CD4-positive, alpha-beta memory T cell (primary cell): ENCODE measurements at regions of chr7 and their contacts with region 1.

Region 1: DNA sequence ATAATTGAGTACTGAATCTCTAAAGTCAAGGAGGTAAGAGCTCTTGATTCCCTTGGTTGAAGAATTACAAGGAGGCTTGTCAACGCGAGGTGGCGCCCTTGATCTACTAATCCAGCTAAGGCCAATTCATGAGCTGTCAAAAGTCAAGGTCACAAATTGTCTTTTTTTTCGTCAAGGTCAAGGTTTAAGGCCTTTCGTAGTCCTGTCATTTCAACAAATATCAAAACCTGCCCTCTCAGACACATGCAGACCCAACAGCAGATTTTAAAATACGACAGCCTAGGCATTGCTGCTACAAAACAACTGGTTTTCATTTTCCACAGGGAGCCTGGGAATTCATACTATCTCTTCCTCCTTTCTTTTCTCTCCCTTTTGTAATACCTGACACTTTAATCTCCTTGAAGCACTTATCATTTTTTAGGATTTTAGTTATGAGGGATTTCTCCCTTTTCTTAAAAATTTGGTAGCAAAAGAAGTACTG is 3.6 kb downstream of the HOXA13 start:
- DNase-seq: peak; percentile 71 to 79 (median 75)
- H3K4me3 ChIP-seq: no peak overlapping the region
- H3K4me3 Mint-ChIP-seq: peak overlapping the region in 1 of 8 donors; percentile 52
- H3K27ac ChIP-seq: no peak overlapping the region
- H3K27ac Mint-ChIP-seq: peak overlapping the region in 2 of 7 donors; percentile 61 to 74
- H3K4me1 ChIP-seq: peaks cover 45% of the 10 kb centered on the region
- H3K4me1 Mint-ChIP-seq: peaks cover 20 to 54% (median 33%) of the 10 kb centered on the region in 4 donors
- H3K27me3 ChIP-seq: peaks cover 76% of the 10 kb centered on the region
- H3K27me3 Mint-ChIP-seq: peaks cover 65 to 72% of the 10 kb centered on the region in 2 donors

Region 2: DNA sequence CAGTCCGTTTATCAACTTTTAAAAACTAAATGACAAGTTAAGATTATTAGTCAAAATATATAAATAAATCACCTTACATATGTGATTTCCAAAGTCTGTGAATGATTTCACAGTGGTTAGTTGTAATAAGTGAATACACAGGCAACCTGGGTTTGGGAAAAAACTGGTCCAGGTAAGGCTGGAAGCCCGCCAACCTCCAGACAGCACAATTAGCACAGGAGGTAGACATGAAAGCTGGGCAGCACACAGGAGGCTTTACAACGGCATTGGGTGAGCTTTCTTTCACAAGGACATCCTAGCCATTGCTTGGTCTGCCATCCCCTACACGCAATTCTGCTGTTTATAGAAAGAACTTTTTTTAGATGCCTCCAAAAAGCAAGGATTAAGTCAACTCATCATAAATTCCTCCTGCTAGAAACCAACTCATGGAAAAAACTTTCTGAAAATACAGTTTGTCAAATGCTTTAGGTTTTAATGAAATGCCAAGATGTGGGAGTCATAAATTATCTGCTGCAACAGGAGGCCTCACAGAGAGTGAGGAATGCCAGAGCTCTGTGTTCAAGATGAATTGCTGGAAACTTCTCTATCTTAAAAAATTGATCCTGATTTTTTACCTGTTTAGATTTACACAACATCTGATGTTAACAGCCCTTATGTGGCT is 1391.2 kb before region 1 on chr7:
- CTCF ChIA-PET with region 1: no interaction called
- POLR2A ChIA-PET with region 1: no interaction called
- intact Hi-C with region 1: no loop called
- DNase-seq: no peak
- H3K4me3 ChIP-seq: no peak overlapping the region
- H3K4me3 Mint-ChIP-seq: no peak overlapping the region
- H3K27ac ChIP-seq: no peak overlapping the region
- H3K27ac Mint-ChIP-seq: no peak overlapping the region
- H3K4me1 ChIP-seq: no peaks in the 10 kb centered on the region
- H3K4me1 Mint-ChIP-seq: peaks cover 0 to 2% (median 0%) of the 10 kb centered on the region in 4 donors
- H3K27me3 ChIP-seq: no peaks in the 10 kb centered on the region
- H3K27me3 Mint-ChIP-seq: peaks cover 0 to 5% of the 10 kb centered on the region in 2 donors

Region 3: DNA sequence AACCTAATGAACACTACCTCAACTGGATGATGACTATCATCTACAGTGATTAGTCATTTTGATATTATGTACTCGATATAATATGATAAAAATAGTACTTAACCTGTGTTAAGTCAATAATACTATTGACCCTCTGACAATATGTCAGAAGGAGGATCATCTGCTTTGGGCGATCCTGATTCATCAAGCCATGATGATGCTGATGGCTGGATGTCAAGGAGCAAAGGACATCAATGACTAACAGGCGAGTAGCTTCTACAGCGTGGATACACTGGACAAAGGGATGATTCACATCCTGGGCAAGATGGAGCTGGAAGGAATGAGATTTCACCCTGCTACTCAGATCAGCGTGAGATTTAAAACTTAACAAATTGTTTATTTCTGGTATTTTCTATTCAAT is 237.5 kb before region 1 on chr7:
- CTCF ChIA-PET with region 1: no interaction called
- POLR2A ChIA-PET with region 1: no interaction called
- intact Hi-C with region 1: no loop called
- DNase-seq: no peak
- H3K4me3 ChIP-seq: no peak overlapping the region
- H3K4me3 Mint-ChIP-seq: no peak overlapping the region
- H3K27ac ChIP-seq: no peak overlapping the region
- H3K27ac Mint-ChIP-seq: no peak overlapping the region
- H3K4me1 ChIP-seq: no peaks in the 10 kb centered on the region
- H3K4me1 Mint-ChIP-seq: no peaks in the 10 kb centered on the region
- H3K27me3 ChIP-seq: no peaks in the 10 kb centered on the region
- H3K27me3 Mint-ChIP-seq: peaks cover 10 to 12% of the 10 kb centered on the region in 2 donors

Region 4: GRCh38 chr7:27115221-27116026 is 80.9 kb before region 1 on chr7:
- CTCF ChIA-PET with region 1: no interaction called
- POLR2A ChIA-PET with region 1: no interaction called
- intact Hi-C with region 1: no loop called
- DNase-seq: no peak
- H3K4me3 ChIP-seq: no peak overlapping the region
- H3K4me3 Mint-ChIP-seq: no peak overlapping the region
- H3K27ac ChIP-seq: no peak overlapping the region
- H3K27ac Mint-ChIP-seq: no peak overlapping the region
- H3K4me1 ChIP-seq: no peaks in the 10 kb centered on the region
- H3K4me1 Mint-ChIP-seq: no peaks in the 10 kb centered on the region
- H3K27me3 ChIP-seq: no peaks in the 10 kb centered on the region
- H3K27me3 Mint-ChIP-seq: peaks cover 7 to 9% of the 10 kb centered on the region in 2 donors

Region 5: DNA sequence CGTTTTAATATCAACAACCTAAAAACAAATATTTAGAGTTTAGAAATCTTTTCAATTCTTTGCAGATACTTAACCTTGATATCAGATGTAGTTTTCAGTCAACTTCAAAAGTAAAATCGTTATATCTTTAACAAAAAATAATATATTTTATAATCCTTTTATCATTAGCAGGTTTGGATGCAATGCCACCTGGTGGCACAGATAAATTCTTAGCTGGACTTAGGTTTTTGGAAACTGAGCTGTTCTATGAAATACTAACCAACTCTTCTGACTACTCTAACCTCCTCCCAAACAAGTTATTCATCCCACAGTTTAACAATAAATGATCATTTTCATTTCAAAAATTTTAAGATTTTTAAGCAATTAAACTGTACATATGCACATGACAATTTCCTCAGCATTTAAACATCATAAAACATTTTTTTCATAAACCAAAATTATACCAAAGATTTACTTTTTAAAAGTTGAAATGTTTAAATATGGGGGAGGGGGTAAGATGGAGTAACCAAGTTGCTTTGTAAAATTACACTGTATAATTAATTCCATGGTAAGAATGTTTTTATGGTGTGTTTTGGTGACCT is 409.5 kb after region 1 on chr7:
- CTCF ChIA-PET with region 1: interaction called, 12 read pairs
- POLR2A ChIA-PET with region 1: no interaction called
- intact Hi-C with region 1: no loop called
- DNase-seq: no peak
- H3K4me3 ChIP-seq: no peak overlapping the region
- H3K4me3 Mint-ChIP-seq: no peak overlapping the region
- H3K27ac ChIP-seq: no peak overlapping the region
- H3K27ac Mint-ChIP-seq: no peak overlapping the region
- H3K4me1 ChIP-seq: no peaks in the 10 kb centered on the region
- H3K4me1 Mint-ChIP-seq: peaks cover 0 to 3% (median 0%) of the 10 kb centered on the region in 4 donors
- H3K27me3 ChIP-seq: no peaks in the 10 kb centered on the region
- H3K27me3 Mint-ChIP-seq: no peaks in the 10 kb centered on the region

Region 6: DNA sequence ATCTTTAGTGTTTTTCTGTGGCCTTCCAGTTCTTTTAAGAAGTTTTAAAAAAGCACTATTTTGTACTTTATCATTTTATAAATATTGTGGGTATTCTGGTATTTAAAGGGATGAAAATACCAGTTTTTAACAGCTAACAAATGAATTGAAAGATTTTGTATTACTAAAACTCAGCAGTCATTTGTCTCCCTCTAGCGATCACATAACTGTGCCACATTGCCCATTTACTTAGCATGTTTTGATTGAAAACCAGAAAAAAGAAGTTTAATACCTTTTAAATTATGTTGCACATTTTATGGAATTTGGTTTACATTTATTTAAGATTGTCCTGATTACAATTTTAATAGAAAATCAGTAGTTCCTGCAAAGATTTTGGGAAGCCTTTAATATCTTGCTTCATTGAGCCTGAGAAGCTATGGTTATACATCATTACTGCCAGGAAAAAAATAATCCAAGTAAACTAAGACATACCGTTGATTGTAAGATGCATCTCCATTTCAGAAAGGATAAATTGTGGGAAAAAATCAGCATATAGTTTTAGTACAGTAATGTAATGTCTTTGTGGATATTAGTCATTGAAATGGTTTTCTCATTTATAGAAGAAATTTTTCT is 578.5 kb after region 1 on chr7:
- CTCF ChIA-PET with region 1: interaction called, 13 read pairs
- POLR2A ChIA-PET with region 1: no interaction called
- intact Hi-C with region 1: no loop called
- DNase-seq: peak in 2 of 5 donors; percentile 7 to 11
- H3K4me3 ChIP-seq: no peak overlapping the region
- H3K4me3 Mint-ChIP-seq: no peak overlapping the region
- H3K27ac ChIP-seq: no peak overlapping the region
- H3K27ac Mint-ChIP-seq: no peak overlapping the region
- H3K4me1 ChIP-seq: no peaks in the 10 kb centered on the region
- H3K4me1 Mint-ChIP-seq: peaks cover 20 to 38% (median 31%) of the 10 kb centered on the region in 4 donors
- H3K27me3 ChIP-seq: no peaks in the 10 kb centered on the region
- H3K27me3 Mint-ChIP-seq: no peaks in the 10 kb centered on the region

Region 7: DNA sequence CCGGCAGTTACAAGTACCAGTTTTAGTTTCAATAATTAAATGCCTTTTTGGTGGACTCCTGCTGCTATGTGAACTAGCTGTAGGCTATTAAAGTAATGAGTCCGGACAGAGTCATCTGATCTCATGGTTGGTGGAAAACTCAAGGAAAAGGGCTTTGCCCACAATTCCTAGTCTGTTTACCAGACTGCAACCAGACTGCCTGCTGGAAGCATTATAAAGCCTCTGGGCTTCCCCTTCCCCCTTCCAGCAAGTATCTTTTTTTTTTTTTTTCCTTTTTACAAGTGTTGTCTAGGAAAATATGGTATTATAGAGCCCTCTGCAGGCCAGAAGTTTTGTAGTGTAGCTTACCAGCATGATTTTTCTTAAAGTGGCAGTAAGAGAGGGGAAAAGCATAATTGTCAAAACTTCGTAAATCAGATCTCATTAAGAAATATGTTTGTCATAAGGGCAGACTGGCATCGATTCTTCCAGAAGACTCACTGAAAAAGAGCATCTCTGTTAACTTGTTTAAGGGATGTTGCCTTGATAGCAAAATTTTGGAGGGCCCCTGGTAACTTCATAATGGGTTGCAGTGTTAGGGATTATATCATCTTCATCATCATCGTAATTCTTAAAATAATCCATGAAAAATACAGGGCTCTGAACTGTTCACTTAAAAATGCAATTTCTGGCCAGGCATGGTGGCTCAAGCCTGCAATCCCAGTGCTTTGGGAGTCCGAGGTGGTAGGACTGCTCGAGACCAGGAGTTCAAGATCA is 724.9 kb after region 1 on chr7:
- CTCF ChIA-PET with region 1: interaction called, 17 read pairs
- POLR2A ChIA-PET with region 1: no interaction called
- intact Hi-C with region 1: loop called (anchors 2 kb)
- DNase-seq: peak in 4 of 5 donors; percentile 8 to 25 (median 10)
- H3K4me3 ChIP-seq: no peak overlapping the region
- H3K4me3 Mint-ChIP-seq: no peak overlapping the region
- H3K27ac ChIP-seq: no peak overlapping the region
- H3K27ac Mint-ChIP-seq: no peak overlapping the region
- H3K4me1 ChIP-seq: no peaks in the 10 kb centered on the region
- H3K4me1 Mint-ChIP-seq: peaks cover 0 to 4% (median 0%) of the 10 kb centered on the region in 4 donors
- H3K27me3 ChIP-seq: no peaks in the 10 kb centered on the region
- H3K27me3 Mint-ChIP-seq: no peaks in the 10 kb centered on the region

Region 8: GRCh38 chr7:28078036-28078901 is 881.9 kb after region 1 on chr7:
- CTCF ChIA-PET with region 1: interaction called, 20 read pairs
- POLR2A ChIA-PET with region 1: no interaction called
- intact Hi-C with region 1: loop called (anchors 1 kb)
- DNase-seq: peak in 4 of 5 donors; percentile 37 to 55 (median 43)
- H3K4me3 ChIP-seq: no peak overlapping the region
- H3K4me3 Mint-ChIP-seq: no peak overlapping the region
- H3K27ac ChIP-seq: no peak overlapping the region
- H3K27ac Mint-ChIP-seq: peak overlapping the region in 1 of 7 donors; percentile 55
- H3K4me1 ChIP-seq: no peaks in the 10 kb centered on the region
- H3K4me1 Mint-ChIP-seq: peaks cover 0 to 20% (median 9%) of the 10 kb centered on the region in 4 donors
- H3K27me3 ChIP-seq: no peaks in the 10 kb centered on the region
- H3K27me3 Mint-ChIP-seq: no peaks in the 10 kb centered on the region

Region 9: GRCh38 chr7:28096713-28097112 is 900.4 kb after region 1 on chr7:
- CTCF ChIA-PET with region 1: interaction called, 38 read pairs
- POLR2A ChIA-PET with region 1: no interaction called
- intact Hi-C with region 1: loop called (anchors 1 kb)
- DNase-seq: peak in 4 of 5 donors; percentile 46 to 54 (median 50)
- H3K4me3 ChIP-seq: no peak overlapping the region
- H3K4me3 Mint-ChIP-seq: no peak overlapping the region
- H3K27ac ChIP-seq: no peak overlapping the region
- H3K27ac Mint-ChIP-seq: no peak overlapping the region
- H3K4me1 ChIP-seq: no peaks in the 10 kb centered on the region
- H3K4me1 Mint-ChIP-seq: peaks cover 0 to 10% (median 6%) of the 10 kb centered on the region in 4 donors
- H3K27me3 ChIP-seq: no peaks in the 10 kb centered on the region
- H3K27me3 Mint-ChIP-seq: no peaks in the 10 kb centered on the region